CD8-positive, alpha-beta T cell (primary cell): ENCODE measurements at regions of chr5 and their contacts with region 1.

Region 1: DNA sequence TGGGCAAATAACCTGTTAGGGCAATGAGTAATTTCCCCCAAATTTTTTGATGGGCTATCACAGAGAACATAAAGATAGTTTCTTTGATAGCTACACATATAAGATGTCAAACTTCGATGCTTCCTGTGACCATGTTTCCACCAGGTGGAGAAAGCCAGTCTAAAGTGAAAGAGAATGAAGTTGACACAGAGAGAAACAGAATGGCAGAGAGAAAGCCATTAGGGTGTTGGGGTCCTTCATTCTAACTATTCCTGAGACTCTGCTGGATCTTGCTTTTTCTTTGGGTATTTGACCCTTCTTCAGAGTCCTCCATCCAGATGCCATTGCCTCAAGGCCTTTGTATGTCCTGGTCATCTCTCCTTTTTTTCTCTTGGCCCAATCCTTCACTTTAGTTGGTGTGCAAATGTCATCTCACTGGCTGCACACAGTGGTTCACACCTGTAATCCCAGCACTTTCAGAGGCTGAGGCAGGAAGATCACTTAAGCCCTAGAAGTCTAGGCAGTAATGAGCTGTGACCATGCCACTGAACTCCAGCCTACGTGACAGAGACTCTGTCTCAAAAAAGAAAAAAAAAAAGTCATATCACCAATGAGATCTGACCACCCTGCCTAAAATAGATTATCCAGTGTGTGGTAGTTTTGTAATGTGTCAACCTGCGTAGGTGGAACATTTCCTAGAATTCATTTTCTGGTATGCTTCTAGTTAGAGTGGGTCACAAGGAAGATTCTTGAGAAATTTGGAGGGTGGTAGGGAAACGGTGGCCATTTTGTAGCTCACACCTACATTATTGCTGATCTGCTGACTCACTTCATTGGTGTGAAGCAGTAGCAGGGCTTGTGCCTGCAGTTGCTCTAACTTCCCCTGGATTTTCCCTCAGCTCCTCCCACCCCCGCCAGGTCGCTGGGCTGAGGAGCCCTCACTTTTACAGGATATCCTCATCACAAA is 20.8 kb upstream of the KIF2A start:
- DNase-seq: peak in 3 of 9 experiments; percentile 30 to 66 (median 64)
- ATAC-seq: peak; percentile 55
- H3K4me3 ChIP-seq: no peak overlapping the region
- H3K4me3 Mint-ChIP-seq: no peak overlapping the region
- H3K27ac ChIP-seq: peak overlapping the region in 1 of 2 experiments; percentile 22
- H3K27ac Mint-ChIP-seq: peak overlapping the region; percentile 37
- H3K4me1 ChIP-seq: peaks cover 15% of the 10 kb centered on the region
- H3K4me1 Mint-ChIP-seq: peaks cover 49% of the 10 kb centered on the region
- H3K27me3 ChIP-seq: no peaks in the 10 kb centered on the region
- H3K27me3 Mint-ChIP-seq: no peaks in the 10 kb centered on the region
- CTCF ChIP-seq: no peak

Region 2: DNA sequence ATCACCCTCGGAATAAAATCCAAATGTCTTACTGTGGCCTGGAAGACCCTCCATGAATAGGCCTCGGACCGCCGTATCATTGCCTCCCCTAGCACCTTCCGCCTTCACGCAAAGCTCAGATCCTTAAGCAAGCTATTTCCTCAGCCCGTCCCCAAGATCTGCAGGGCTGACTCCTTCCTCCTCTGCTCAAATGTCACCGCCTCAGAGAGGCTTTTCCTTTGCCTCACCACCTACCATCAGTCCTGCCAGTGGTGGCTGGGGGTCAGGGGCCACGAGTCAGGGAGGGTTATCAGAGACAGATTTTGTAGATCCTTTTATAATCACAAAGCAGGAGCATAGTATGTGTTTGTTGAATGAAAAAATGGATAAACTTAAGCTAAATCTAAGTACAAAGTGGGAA is 53.6 kb before region 1 on chr5:
- CTCF ChIA-PET with region 1: no interaction called
- POLR2A ChIA-PET with region 1: no interaction called
- intact Hi-C with region 1: loop called in 1 of 2 experiments (anchors 10 kb)
- DNase-seq: no peak
- ATAC-seq: no peak
- H3K4me3 ChIP-seq: no peak overlapping the region
- H3K4me3 Mint-ChIP-seq: no peak overlapping the region
- H3K27ac ChIP-seq: no peak overlapping the region
- H3K27ac Mint-ChIP-seq: no peak overlapping the region
- H3K4me1 ChIP-seq: no peaks in the 10 kb centered on the region
- H3K4me1 Mint-ChIP-seq: no peaks in the 10 kb centered on the region
- H3K27me3 ChIP-seq: no peaks in the 10 kb centered on the region
- H3K27me3 Mint-ChIP-seq: no peaks in the 10 kb centered on the region
- CTCF ChIP-seq: no peak

Region 3: GRCh38 chr5:62271876-62272275 is 13.3 kb before region 1 on chr5:
- CTCF ChIA-PET with region 1: interaction called, 4 read pairs
- POLR2A ChIA-PET with region 1: interaction called, 4 read pairs
- intact Hi-C with region 1: loop called in 1 of 2 experiments (anchors 2 kb)
- DNase-seq: no peak
- ATAC-seq: no peak
- H3K4me3 ChIP-seq: no peak overlapping the region
- H3K4me3 Mint-ChIP-seq: no peak overlapping the region
- H3K27ac ChIP-seq: no peak overlapping the region
- H3K27ac Mint-ChIP-seq: no peak overlapping the region
- H3K4me1 ChIP-seq: peaks cover 14% of the 10 kb centered on the region
- H3K4me1 Mint-ChIP-seq: peaks cover 23% of the 10 kb centered on the region
- H3K27me3 ChIP-seq: no peaks in the 10 kb centered on the region
- H3K27me3 Mint-ChIP-seq: no peaks in the 10 kb centered on the region
- CTCF ChIP-seq: no peak

Region 4: GRCh38 chr5:62297026-62297425 is 11.8 kb after region 1 on chr5:
- CTCF ChIA-PET with region 1: no interaction called
- POLR2A ChIA-PET with region 1: interaction called, 11 read pairs
- intact Hi-C with region 1: no loop called
- DNase-seq: peak in 2 of 9 experiments; percentile 35 to 63
- ATAC-seq: peak; percentile 7
- H3K4me3 ChIP-seq: no peak overlapping the region
- H3K4me3 Mint-ChIP-seq: peak overlapping the region; percentile 46
- H3K27ac ChIP-seq: no peak overlapping the region
- H3K27ac Mint-ChIP-seq: peak overlapping the region; percentile 58
- H3K4me1 ChIP-seq: peaks cover 55% of the 10 kb centered on the region
- H3K4me1 Mint-ChIP-seq: peaks cover 69% of the 10 kb centered on the region
- H3K27me3 ChIP-seq: no peaks in the 10 kb centered on the region
- H3K27me3 Mint-ChIP-seq: no peaks in the 10 kb centered on the region
- CTCF ChIP-seq: no peak

Region 5: DNA sequence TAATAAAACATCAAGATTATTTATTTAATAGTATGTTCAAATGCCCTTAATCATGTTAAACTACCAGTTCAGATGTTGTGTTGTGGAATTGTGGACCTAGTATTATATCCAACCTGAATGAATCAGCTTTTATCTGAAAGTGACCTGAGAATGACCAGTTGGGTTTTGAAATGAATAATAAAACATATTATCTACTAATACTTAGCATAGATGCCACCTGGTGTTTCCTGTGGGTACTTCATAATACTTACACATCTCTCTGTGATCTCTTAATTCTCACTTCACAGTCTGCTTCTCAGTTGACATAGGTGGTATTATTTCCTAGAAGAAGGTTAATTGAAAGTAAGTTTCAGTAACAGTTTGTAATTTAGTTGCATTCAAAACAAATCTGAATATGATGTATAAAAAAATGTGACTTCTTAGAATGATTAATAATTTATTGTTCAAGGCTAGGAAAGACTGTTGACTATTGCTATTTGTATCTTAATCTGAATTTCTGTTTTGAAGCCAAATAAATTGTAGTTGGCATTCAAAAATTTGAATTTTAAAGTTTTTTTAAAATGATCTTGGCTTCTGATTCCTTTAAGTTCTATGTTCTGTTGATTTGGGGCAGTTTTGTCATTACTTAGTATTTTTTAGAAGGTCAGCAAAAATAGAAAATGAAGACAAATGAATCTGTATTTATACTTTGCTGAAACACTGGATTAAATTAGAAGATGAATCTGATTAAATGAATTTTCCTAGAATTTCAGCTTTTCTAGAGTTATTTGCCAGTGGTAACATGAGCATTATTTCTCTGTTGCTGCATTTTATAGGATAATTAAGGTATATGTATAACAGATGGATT is 69.0 kb after region 1 on chr5:
- CTCF ChIA-PET with region 1: interaction called, 5 read pairs
- POLR2A ChIA-PET with region 1: no interaction called
- intact Hi-C with region 1: loop called in 1 of 2 experiments (anchors 2 kb)
- DNase-seq: peak in 3 of 9 experiments; percentile 30 to 76 (median 69)
- ATAC-seq: peak; percentile 92
- H3K4me3 ChIP-seq: no peak overlapping the region
- H3K4me3 Mint-ChIP-seq: no peak overlapping the region
- H3K27ac ChIP-seq: no peak overlapping the region
- H3K27ac Mint-ChIP-seq: peak overlapping the region; percentile 55
- H3K4me1 ChIP-seq: peaks cover 13% of the 10 kb centered on the region
- H3K4me1 Mint-ChIP-seq: peaks cover 11% of the 10 kb centered on the region
- H3K27me3 ChIP-seq: no peaks in the 10 kb centered on the region
- H3K27me3 Mint-ChIP-seq: no peaks in the 10 kb centered on the region
- CTCF ChIP-seq: peak; percentile 96

Region 6: GRCh38 chr5:62886603-62887315 is 601.5 kb after region 1 on chr5:
- CTCF ChIA-PET with region 1: no interaction called
- POLR2A ChIA-PET with region 1: no interaction called
- intact Hi-C with region 1: no loop called
- DNase-seq: no peak
- ATAC-seq: no peak
- H3K4me3 ChIP-seq: no peak overlapping the region
- H3K4me3 Mint-ChIP-seq: no peak overlapping the region
- H3K27ac ChIP-seq: no peak overlapping the region
- H3K27ac Mint-ChIP-seq: no peak overlapping the region
- H3K4me1 ChIP-seq: no peaks in the 10 kb centered on the region
- H3K4me1 Mint-ChIP-seq: no peaks in the 10 kb centered on the region
- H3K27me3 ChIP-seq: no peaks in the 10 kb centered on the region
- H3K27me3 Mint-ChIP-seq: no peaks in the 10 kb centered on the region
- CTCF ChIP-seq: no peak